ENCODE measurements at regions of chr10 and their contacts with region 1.

Region 1: GRCh38 chr10:125719146-125720001 is at the start of gene EDRF1:
- DNase-seq: peak; percentile 99
- H3K4me3 ChIP-seq: peak within 1 kb of the TSS; percentile 91
- H3K27ac ChIP-seq: peak within 1 kb of the TSS; percentile 97
- H3K4me1 ChIP-seq: peaks cover 27% of the 10 kb centered on the region
- CTCF ChIP-seq: no peak
- total RNA-seq, gene EDRF1: 87.5 and 117 TPM in 2 replicates

Region 2: GRCh38 chr10:125060826-125061556 is 658.4 kb before region 1 on chr10:
- CTCF ChIA-PET with region 1: no interaction called
- POLR2A ChIA-PET with region 1: no interaction called
- intact Hi-C with region 1: loop called (anchors 10 kb)
- DNase-seq: peak; percentile 73
- H3K4me3 ChIP-seq: peak overlapping the region; percentile 37
- H3K27ac ChIP-seq: peak overlapping the region; percentile 8
- H3K4me1 ChIP-seq: peaks cover 61% of the 10 kb centered on the region
- CTCF ChIP-seq: peak; percentile 89

Region 3: DNA sequence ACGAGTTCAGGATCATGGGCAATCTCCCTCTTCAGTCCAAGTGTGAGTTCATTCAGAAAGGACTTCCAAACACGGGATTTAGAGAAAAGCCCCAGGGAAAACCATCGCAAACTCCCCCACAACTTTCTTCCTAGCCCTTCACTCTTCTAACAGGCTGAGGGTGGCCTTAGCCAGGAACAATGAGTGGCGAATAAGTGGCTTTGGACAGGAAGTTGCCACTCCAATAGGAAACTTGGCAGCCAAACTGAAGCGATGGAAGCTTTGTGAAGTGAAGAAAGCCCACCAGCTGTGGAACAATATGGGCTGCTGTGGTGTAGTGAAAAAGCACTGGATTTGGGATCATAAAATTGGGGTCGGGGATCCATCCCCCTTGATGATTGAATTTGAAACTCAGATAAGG is 229.6 kb before region 1 on chr10:
- CTCF ChIA-PET with region 1: no interaction called
- POLR2A ChIA-PET with region 1: no interaction called
- intact Hi-C with region 1: no loop called
- DNase-seq: no peak
- H3K4me3 ChIP-seq: no peak overlapping the region
- H3K27ac ChIP-seq: no peak overlapping the region
- H3K4me1 ChIP-seq: no peaks in the 10 kb centered on the region
- CTCF ChIP-seq: no peak

Region 4: DNA sequence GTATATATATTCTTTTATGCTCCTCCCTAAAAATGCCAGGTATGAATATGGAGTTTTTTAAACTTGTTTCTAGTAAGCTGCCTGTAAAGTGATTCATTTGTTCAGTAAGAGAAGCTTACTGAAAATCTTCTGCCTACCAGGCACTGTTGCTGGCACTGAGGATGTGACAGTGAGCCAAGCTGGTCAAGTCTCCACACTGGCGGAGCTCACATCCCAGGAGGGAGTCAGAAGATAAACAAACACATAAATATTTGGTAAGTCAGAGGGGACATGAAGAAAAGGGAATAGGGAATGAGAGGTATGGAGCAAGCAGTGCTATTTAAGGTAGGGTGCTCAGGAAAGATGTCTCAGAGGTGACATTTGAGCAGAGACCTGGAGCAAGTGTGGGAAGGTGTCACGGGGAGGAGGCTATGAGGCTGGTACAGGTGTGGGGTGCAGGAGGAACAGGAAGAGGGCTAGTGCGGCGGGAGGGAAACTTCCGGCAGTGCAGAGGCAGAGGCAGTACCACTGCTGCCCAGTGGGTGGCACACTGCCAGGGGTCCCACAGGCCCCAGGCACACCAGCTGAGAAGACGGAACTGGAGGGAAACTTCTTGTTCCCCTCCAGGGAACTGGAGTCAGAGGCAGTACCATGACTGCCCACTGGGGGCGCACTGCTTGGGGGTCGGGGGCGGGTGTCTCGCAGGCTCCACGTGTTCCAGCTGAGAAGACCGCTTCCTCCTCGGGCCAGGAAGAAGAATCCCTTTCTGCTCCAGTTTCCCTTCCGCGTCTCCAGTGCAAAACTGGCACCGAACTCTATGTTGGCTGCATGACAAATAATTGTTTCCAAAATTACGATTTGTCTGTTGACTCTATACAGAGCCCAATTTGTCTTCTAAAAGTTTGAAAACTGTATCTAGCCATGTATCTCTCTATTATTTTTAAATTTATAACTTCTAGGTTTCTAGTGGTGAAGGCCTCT is 197.4 kb before region 1 on chr10:
- CTCF ChIA-PET with region 1: no interaction called
- POLR2A ChIA-PET with region 1: no interaction called
- intact Hi-C with region 1: loop called (anchors 1 kb)
- DNase-seq: peak; percentile 78
- H3K4me3 ChIP-seq: peak overlapping the region; percentile 30
- H3K27ac ChIP-seq: no peak overlapping the region
- H3K4me1 ChIP-seq: peaks cover 6% of the 10 kb centered on the region
- CTCF ChIP-seq: peak; percentile 88

Region 5: DNA sequence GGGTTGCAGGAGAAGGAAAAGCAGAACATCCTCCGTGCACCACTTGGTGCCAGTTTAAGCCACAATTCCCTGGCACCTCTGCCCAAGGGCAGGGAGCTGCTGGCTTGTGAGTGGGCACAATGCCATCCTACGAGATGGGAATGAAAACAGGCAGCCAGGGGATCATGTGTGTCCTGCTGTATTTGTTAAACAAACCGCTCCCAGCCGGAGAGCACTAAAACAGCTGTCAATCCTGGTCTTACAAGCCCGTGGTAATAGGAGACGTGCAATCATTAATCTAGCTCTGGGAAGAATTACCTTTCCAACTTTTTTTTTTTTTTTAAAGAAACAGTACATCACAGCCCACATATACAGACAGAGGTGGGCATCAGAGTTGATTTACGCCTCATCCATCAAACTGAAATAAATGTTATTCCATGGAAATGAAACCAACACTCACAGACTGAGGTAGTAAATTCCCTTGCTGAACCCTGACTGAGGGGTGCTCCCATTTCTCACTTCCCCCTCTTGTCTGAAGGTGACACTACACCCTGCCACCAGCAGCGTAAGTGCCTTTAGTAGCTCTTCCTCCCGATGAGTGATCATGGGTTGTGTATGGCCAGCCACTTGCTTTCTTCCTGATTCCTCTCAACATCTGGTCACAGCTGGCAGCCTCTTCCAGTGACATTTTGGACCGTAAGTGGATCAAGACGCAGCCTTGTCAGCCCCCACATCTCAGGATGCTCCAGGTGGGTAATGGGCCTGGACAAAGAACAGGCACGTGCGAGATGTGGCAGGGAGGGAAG is 180.2 kb before region 1 on chr10:
- CTCF ChIA-PET with region 1: no interaction called
- POLR2A ChIA-PET with region 1: no interaction called
- intact Hi-C with region 1: no loop called
- DNase-seq: no peak
- H3K4me3 ChIP-seq: no peak overlapping the region
- H3K27ac ChIP-seq: no peak overlapping the region
- H3K4me1 ChIP-seq: no peaks in the 10 kb centered on the region
- CTCF ChIP-seq: no peak

Region 6: DNA sequence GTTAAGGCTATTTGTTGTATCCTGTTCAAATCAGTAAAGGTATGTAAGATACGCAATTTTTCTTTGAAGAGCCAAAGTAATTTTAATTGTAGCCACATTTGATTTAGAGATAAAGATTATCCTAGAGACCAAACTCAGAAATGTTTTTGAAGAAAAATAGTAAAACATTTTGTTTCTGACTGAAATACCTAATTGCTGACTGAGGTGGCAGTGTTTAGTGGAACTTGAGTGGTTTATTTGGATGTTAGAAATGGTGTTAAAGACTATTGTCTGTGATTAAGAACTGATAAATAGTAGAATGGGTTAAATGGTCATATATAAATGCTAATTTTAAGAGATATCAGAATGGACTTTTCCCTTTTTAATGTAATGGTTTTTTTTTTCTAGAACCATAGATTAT is 15.4 kb after region 1 on chr10:
- CTCF ChIA-PET with region 1: no interaction called
- POLR2A ChIA-PET with region 1: interaction called, 15 read pairs
- intact Hi-C with region 1: no loop called
- DNase-seq: no peak
- H3K4me3 ChIP-seq: no peak overlapping the region
- H3K27ac ChIP-seq: no peak overlapping the region
- H3K4me1 ChIP-seq: no peaks in the 10 kb centered on the region
- CTCF ChIP-seq: peak; percentile 56

Region 7: DNA sequence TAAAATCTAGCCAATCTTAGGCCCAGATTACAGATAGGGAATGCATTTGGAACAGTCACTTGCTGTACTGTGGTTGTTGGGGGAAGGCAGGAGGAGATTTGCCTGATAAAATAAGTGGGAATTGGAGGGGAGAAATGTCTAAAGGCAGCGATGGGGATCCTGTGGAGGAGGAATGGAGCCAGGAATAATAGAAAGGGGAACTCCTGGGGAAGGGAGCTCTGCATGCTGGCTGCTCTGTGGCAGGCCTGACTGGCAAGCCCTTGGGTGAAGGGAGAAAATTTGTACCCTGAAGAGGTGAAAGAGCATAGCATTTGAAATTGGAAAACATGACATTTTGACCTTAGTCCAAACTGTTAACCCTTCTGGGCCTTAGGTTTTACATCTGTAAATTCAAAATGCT is 42.6 kb after region 1 on chr10:
- CTCF ChIA-PET with region 1: no interaction called
- POLR2A ChIA-PET with region 1: no interaction called
- intact Hi-C with region 1: loop called (anchors 2 kb)
- DNase-seq: no peak
- H3K4me3 ChIP-seq: no peak overlapping the region
- H3K27ac ChIP-seq: no peak overlapping the region
- H3K4me1 ChIP-seq: no peaks in the 10 kb centered on the region
- CTCF ChIP-seq: no peak

Region 8: DNA sequence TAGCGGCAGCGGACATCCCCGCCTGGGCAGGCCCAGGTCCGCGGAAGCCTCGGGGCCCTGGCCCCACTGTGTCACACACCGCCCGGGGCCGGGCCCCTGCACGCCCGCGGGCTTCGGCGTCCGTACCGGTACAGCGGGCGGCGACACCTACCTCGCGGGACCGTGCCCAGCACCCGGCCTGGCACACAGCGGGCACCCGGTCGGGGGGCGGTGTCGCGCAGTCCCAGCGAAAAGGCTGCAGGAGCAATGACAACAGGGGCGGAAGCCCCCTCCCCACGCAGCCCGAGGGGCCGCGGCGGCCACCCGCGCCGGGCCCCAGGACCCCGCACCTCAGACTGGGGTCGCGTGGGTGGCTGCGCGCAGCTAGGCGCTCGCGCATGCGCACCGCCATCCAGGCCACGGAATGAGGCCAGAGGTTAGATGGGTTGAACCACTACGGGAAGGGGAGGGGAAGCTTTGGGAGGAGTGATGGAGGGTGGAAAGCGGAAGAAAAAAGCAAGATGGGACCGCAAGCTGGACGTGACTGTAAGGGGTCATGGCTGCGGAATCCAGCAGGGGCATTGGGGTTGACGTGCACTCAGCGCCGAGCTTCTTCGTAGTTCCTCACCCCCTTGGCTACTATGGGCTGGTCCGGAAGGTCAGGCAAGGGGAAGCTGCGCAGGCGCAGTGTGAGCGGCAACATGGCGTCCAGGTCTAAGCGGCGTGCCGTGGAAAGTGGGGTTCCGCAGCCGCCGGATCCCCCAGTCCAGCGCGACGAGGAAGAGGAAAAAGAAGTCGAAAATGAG is 103.7 kb after region 1 on chr10 and contains the starts of genes BCCIP and UROS:
- CTCF ChIA-PET with region 1: no interaction called
- POLR2A ChIA-PET with region 1: interaction called, 5 read pairs
- intact Hi-C with region 1: loop called (anchors 1 kb)
- DNase-seq: peak; percentile 96
- H3K4me3 ChIP-seq: peak within 1 kb of the TSS; percentile 77
- H3K27ac ChIP-seq: peak within 1 kb of the TSS; percentile 53
- H3K4me1 ChIP-seq: peaks cover 32% of the 10 kb centered on the region
- CTCF ChIP-seq: no peak
- total RNA-seq, gene BCCIP: 59.1 and 61.4 TPM in 2 replicates
- total RNA-seq, gene UROS: 37.3 and 39.7 TPM in 2 replicates